ENCODE measurements at regions of chr2 and their contacts with region 1.

Region 1: DNA sequence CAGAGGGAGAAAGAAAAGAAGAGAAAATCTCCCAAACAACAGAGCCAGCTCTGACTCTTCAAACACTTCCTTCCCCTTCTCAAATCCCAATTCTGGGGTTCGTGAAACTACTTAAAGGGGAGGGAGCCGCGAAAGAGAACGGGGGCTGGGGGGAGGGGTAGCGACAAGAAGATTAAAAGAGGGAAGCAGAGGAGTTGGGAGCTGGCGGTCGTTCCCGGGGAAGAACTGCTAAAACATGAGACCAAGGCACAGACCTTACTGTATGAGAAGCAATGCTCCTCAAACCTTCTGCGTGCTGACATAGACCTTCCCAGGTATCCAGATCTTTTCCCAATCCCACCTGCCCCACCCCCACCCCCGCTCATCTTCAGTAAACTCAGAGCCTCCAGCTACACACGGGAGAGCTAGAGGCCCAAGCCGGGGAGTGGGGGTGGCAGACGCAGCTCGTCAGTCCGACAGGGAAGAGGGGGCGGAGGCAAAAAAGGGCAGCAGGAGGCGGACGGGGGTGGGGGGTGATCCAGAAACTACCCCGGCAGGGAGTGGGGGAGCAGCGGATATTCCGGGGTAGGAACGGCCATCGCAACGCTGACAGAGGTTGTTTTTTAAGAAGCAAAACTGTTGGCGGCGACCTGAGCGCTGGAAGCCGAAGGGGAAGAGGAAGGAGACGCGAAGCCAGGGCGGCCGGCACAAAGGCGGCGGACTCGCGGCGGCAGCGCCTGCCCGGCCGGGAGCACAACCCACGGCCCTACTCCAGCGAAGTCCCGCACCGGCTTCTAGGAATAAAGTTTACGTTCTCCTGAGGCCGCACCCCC is 1.0 kb downstream of the BAZ2B start:
- DNase-seq: peak; percentile 36 to 59
- ATAC-seq: peak; percentile 76 to 79 (median 77)
- H3K4me3 ChIP-seq: peak overlapping the region; percentile 74
- H3K4me3 Mint-ChIP-seq: peak overlapping the region; percentile 91
- H3K27ac ChIP-seq: peak overlapping the region; percentile 67
- H3K27ac Mint-ChIP-seq: peak overlapping the region in 1 of 2 donors; percentile 87
- H3K4me1 ChIP-seq: peaks cover 9% of the 10 kb centered on the region
- H3K4me1 Mint-ChIP-seq: peaks cover 17% of the 10 kb centered on the region in 2 donors
- H3K27me3 ChIP-seq: peaks cover 15% of the 10 kb centered on the region
- H3K27me3 Mint-ChIP-seq: peaks cover 16% of the 10 kb centered on the region in 2 donors
- CTCF ChIP-seq: no peak

Region 2: DNA sequence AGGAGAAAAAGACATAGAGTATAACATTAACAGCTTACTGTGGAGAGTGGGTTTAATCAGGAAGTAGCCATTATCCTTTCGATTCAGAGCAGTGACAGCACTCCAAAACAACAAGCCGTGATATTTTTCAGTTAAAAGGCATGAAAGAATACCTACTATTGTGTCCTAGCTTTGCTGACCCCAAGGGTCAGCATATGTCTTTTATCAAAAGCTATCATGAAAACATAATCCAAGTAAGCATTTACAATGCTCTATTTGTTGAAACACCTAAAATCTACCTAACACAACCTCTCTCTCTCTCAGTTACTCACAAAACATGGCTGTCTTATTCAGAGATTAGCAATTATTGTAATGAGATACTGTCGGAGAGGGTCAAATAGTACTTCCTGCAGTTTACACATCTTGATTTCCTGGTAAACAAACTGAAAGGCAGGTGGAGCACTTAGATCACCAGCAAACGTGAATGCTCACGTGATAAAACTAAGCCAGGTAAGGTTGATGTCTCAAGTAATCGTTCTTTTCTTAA is 99.0 kb before region 1 on chr2:
- intact Hi-C with region 1: loop called (anchors 10 kb)
- DNase-seq: peak in 1 of 2 donors; percentile 80
- ATAC-seq: peak; percentile 90 to 94 (median 92)
- H3K4me3 ChIP-seq: peak overlapping the region; percentile 75
- H3K4me3 Mint-ChIP-seq: peak overlapping the region; percentile 93
- H3K27ac ChIP-seq: peak overlapping the region; percentile 83
- H3K27ac Mint-ChIP-seq: peak overlapping the region; percentile 93 to 95
- H3K4me1 ChIP-seq: peaks cover 4% of the 10 kb centered on the region
- H3K4me1 Mint-ChIP-seq: peaks cover 15 to 29% of the 10 kb centered on the region in 2 donors
- H3K27me3 ChIP-seq: no peaks in the 10 kb centered on the region
- H3K27me3 Mint-ChIP-seq: no peaks in the 10 kb centered on the region
- CTCF ChIP-seq: no peak

Region 3: GRCh38 chr2:159760326-159760725 is 145.0 kb after region 1 on chr2:
- intact Hi-C with region 1: no loop called
- DNase-seq: no peak
- ATAC-seq: no peak
- H3K4me3 ChIP-seq: no peak overlapping the region
- H3K4me3 Mint-ChIP-seq: no peak overlapping the region
- H3K27ac ChIP-seq: no peak overlapping the region
- H3K27ac Mint-ChIP-seq: peak overlapping the region; percentile 29 to 78
- H3K4me1 ChIP-seq: no peaks in the 10 kb centered on the region
- H3K4me1 Mint-ChIP-seq: peaks cover 19 to 31% of the 10 kb centered on the region in 2 donors
- H3K27me3 ChIP-seq: no peaks in the 10 kb centered on the region
- H3K27me3 Mint-ChIP-seq: no peaks in the 10 kb centered on the region
- CTCF ChIP-seq: no peak

Measured in natural killer cell (primary cell).